ENCODE measurements at regions of chrX and their contacts with region 1.

Region 1: DNA sequence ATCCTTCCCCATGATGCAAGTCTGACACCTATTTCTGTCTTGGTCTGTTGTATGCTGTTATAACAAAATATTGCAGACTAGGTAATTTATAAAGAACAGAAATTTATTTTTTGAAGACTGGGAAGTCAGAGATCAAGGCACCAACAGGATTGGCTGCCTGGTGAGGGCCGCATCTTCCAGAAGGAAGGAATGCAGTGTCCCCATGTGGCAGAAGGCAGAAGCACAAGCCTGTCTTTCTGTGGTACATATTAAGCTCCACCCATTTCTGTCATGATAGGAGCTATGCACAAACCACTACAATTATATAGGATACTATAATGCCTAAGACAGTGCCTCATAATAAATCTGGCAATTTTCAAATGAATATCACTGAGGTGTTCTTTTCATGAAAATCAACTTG is 502.3 kb upstream of the DIAPH2 start:
- DNase-seq: peak; percentile 70
- H3K4me3 ChIP-seq: no peak overlapping the region
- H3K27ac ChIP-seq: no peak overlapping the region
- H3K4me1 ChIP-seq: peaks cover 10% of the 10 kb centered on the region
- H3K27me3 ChIP-seq: no peaks in the 10 kb centered on the region
- CTCF ChIP-seq: peak; percentile 78

Region 2: DNA sequence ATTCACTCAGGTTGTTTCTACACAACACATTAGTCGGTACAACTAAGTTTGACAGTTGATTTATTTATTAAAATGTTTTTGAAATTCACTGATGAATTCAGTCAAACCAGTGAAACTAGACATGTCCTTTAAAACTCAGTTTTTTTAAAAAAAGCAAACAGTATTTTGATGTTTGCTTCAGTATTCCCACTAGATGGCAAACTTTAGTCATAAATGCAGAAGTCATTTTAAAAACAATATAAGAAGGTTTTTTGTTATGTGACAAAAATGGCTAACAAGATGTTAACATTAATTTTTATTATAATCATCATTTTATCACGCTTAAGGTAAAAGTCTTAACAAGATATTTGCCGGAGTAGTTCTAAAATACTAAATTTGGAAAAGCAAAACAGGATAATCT is 835.5 kb before region 1 on chrX:
- CTCF ChIA-PET with region 1: no interaction called
- POLR2A ChIA-PET with region 1: no interaction called
- intact Hi-C with region 1: loop called (anchors 5 kb)
- DNase-seq: peak; percentile 39
- H3K4me3 ChIP-seq: no peak overlapping the region
- H3K27ac ChIP-seq: no peak overlapping the region
- H3K4me1 ChIP-seq: no peaks in the 10 kb centered on the region
- H3K27me3 ChIP-seq: no peaks in the 10 kb centered on the region
- CTCF ChIP-seq: peak; percentile 54; the same call in 1 of the 2 replicates

Region 3: DNA sequence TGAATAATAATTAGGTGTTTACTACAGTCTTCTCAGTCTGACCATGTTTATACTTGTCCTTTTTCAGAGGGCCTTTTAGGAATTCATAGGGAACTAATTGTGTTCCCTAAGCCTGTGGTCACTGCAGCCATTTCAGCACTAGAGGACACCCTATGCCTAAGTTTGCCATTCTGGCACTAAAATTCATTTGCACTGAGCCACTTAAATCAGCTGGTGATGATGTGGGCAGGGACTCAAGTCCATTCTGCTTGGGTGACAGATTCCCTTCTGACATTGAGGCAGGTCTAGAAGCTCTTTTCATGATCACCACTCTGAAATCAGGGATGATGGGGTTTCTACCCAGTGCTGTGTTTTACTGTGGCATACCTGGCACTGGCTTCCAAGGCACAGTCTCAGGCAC is 676.6 kb before region 1 on chrX:
- CTCF ChIA-PET with region 1: no interaction called
- POLR2A ChIA-PET with region 1: no interaction called
- intact Hi-C with region 1: loop called (anchors 10 kb)
- DNase-seq: peak; percentile 37
- H3K4me3 ChIP-seq: no peak overlapping the region
- H3K27ac ChIP-seq: no peak overlapping the region
- H3K4me1 ChIP-seq: no peaks in the 10 kb centered on the region
- H3K27me3 ChIP-seq: no peaks in the 10 kb centered on the region
- CTCF ChIP-seq: peak; percentile 53

Region 4: GRCh38 chrX:95903490-95903889 is 278.9 kb before region 1 on chrX:
- CTCF ChIA-PET with region 1: no interaction called
- POLR2A ChIA-PET with region 1: no interaction called
- intact Hi-C with region 1: loop called (anchors 2 kb)
- DNase-seq: peak; percentile 14
- H3K4me3 ChIP-seq: no peak overlapping the region
- H3K27ac ChIP-seq: no peak overlapping the region
- H3K4me1 ChIP-seq: no peaks in the 10 kb centered on the region
- H3K27me3 ChIP-seq: no peaks in the 10 kb centered on the region
- CTCF ChIP-seq: 0 out of 2 replicates have a peak, but pooled peaks have one; percentile 16

Region 5: GRCh38 chrX:97867266-97867665 is 1684.9 kb after region 1 on chrX:
- CTCF ChIA-PET with region 1: no interaction called
- POLR2A ChIA-PET with region 1: no interaction called
- intact Hi-C with region 1: no loop called
- DNase-seq: no peak
- H3K4me3 ChIP-seq: no peak overlapping the region
- H3K27ac ChIP-seq: no peak overlapping the region
- H3K4me1 ChIP-seq: no peaks in the 10 kb centered on the region
- H3K27me3 ChIP-seq: no peaks in the 10 kb centered on the region
- CTCF ChIP-seq: no peak

Measured in A673 (cell line).